IMR-90 (cell line): ENCODE measurements at regions of chr2 and their contacts with region 1.

Region 1: DNA sequence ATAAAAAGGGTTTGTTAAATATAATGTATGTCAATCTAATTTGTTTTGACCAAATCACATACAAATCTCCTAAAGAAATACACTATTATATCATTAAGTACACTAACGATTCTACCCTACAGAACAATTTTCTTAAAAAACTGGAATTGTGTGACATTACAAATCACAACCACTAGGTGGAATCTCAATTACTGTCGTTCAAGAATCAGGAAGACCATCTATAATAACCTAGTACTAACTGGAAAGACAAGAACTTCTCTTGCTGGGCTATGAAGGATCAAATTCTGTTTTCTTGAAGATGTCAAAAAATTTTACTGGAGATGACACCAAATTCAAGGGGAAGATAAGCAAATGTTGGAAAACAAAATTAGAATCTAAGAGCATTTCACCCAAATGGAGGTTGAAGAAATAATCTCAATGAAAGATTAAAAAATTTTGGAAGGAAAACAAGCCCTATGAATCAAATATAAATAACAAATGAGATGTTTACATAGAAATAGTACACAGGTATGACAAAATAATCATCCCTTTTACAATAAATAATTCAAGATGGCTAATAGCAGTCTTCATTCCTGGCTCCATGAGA is 110.9 kb downstream of the STK39 start:
- DNase-seq: peak; percentile 48
- ATAC-seq: 0 out of 2 replicates have a peak, but pooled peaks have one; percentile 36
- H3K4me3 ChIP-seq: no peak overlapping the region
- H3K27ac ChIP-seq: no peak overlapping the region
- H3K4me1 ChIP-seq: peaks cover 4% of the 10 kb centered on the region
- H3K27me3 ChIP-seq: no peaks in the 10 kb centered on the region
- CTCF ChIP-seq: peak; percentile 52
- POLR2A ChIP-seq: no peak
- RAD21 ChIP-seq: peak; percentile 47

Region 2: DNA sequence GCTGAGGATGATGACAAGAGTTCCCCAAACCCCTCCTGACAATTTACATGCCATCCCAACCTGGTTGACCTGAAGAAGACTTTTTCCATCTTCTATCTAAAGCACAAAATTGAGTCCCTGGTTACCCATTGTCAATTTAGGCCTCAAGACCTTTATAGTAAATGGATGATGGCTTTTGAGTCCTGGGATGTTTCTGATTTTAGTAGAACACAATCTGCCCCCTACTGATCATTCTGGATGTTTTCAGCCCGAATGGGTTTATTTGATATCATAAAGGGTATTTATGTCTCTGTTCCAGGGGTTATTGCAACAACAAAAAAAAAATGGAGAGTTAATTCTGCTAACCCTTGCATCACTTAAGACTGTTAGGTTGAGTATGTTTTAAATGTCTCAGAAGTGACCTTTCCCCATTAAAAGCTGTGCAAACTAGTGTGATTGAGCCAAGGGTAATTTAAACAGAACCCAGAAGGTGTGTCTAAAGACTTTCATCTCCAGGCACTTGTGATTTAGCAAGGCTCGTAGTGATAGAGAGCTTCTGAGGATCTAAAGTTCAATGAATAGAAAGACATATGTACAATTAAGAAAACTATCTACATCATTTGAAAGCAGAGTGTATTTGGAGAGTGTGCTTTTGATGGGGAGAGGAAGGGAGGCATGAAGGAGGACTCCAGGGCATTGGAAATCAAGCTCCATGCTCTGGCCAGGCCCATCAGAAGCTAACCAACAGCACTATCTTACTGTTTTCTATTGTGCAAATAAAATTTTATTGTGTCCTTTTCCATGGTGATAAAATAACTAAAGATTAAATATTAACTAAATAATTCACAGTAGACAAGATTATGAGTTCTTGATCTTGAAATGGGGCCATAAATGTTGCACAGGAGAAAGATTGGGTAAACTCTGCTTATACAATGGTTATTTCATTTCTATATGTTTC is 569.3 kb after region 1 on chr2:
- CTCF ChIA-PET with region 1: no interaction called
- POLR2A ChIA-PET with region 1: no interaction called
- dilution Hi-C with region 1: no loop called
- in situ Hi-C with region 1: no loop called
- intact Hi-C with region 1: loop called (anchors 10 kb)
- DNase-seq: peak; percentile 51
- ATAC-seq: peak; percentile 65
- H3K4me3 ChIP-seq: no peak overlapping the region
- H3K27ac ChIP-seq: no peak overlapping the region
- H3K4me1 ChIP-seq: no peaks in the 10 kb centered on the region
- H3K27me3 ChIP-seq: no peaks in the 10 kb centered on the region
- CTCF ChIP-seq: peak; percentile 51
- POLR2A ChIP-seq: no peak
- RAD21 ChIP-seq: peak; percentile 52

Region 3: GRCh38 chr2:168758970-168759820 is 622.7 kb after region 1 on chr2:
- CTCF ChIA-PET with region 1: no interaction called
- POLR2A ChIA-PET with region 1: no interaction called
- dilution Hi-C with region 1: no loop called
- in situ Hi-C with region 1: no loop called
- intact Hi-C with region 1: loop called (anchors 5 kb)
- DNase-seq: peak; percentile 59
- ATAC-seq: peak; percentile 95
- H3K4me3 ChIP-seq: no peak overlapping the region
- H3K27ac ChIP-seq: no peak overlapping the region
- H3K4me1 ChIP-seq: no peaks in the 10 kb centered on the region
- H3K27me3 ChIP-seq: no peaks in the 10 kb centered on the region
- CTCF ChIP-seq: peak; percentile 62
- POLR2A ChIP-seq: no peak
- RAD21 ChIP-seq: peak; percentile 66

Region 4: DNA sequence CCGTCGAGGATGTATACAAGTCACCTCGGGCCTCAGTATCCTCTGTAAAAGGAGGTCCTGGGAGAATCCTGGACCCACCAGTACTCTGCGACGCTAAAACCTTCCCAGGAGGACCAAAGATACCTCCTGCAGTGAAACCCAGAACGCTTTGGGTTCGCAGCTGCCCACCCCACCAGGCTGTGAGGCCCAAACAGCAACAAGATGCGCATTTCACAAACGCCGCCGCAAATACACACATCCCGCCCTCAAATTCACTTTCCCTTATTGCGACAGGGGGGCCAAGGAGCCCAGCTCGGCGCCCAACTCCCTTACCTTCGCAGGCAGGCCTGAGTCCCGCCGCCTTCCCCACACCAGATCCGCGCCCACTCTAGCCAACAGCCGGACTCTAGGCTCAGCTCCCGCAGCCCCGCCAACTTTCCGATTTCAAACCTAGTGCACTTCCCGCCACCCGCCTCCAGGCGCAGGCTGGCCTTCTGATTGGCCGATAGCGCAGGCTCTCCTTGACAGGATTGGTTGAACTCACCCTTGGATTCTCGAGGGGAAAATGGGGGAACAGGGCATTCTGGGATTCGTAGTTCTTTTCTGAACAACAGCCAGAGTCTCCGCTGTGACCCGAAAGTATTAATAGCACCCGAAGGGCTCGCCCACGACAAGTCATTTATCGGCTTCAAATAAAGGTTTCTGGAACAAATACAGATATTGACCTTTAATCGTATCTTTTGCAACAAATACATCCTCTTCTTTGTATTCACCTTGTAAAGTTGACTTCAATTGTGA is 753.7 kb after region 1 on chr2 and contains the start of gene SPC25:
- CTCF ChIA-PET with region 1: no interaction called
- POLR2A ChIA-PET with region 1: no interaction called
- dilution Hi-C with region 1: no loop called
- in situ Hi-C with region 1: loop called (anchors 25 kb)
- intact Hi-C with region 1: no loop called
- DNase-seq: peak; percentile 85
- ATAC-seq: peak; percentile 100
- H3K4me3 ChIP-seq: peak within 1 kb of the TSS; percentile 77
- H3K27ac ChIP-seq: peak within 1 kb of the TSS; percentile 21; the same call in 1 of the 2 replicates
- H3K4me1 ChIP-seq: no peaks in the 10 kb centered on the region
- H3K27me3 ChIP-seq: peaks cover 3% of the 10 kb centered on the region; the same call in 1 of the 2 replicates
- CTCF ChIP-seq: no peak
- POLR2A ChIP-seq: no peak
- RAD21 ChIP-seq: no peak
- total RNA-seq, gene SPC25: 2.0 and 5.6 TPM in 2 replicates

Region 5: DNA sequence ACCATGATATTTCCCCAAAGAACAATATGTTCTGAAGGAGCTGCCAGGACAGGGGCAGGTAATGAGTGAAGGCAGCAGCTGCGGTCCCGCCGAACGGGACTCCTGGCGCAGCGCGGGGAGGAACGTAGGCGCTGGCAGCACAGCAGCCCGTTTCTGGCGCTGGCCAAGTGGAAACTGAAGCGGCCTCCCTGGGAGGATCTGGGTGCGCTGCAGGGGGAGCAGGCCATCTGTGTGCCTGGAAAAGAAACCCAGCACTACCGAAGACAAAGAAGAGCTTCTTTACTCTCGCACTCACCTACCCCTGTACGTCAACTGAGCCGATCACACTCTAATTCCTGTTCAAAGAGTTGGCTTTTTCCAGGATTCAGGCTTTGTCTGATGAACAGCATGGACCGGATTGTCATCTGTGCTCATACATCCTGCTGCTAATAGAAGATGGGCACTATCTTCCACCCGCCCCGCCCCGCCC is 776.5 kb after region 1 on chr2:
- CTCF ChIA-PET with region 1: interaction called, 3 read pairs
- POLR2A ChIA-PET with region 1: no interaction called
- dilution Hi-C with region 1: no loop called
- in situ Hi-C with region 1: no loop called
- intact Hi-C with region 1: loop called (anchors 10 kb)
- DNase-seq: peak; percentile 4
- ATAC-seq: peak; percentile 68
- H3K4me3 ChIP-seq: peak overlapping the region; percentile 15
- H3K27ac ChIP-seq: no peak overlapping the region
- H3K4me1 ChIP-seq: no peaks in the 10 kb centered on the region
- H3K27me3 ChIP-seq: peaks cover 16% of the 10 kb centered on the region
- CTCF ChIP-seq: no peak
- POLR2A ChIP-seq: no peak
- RAD21 ChIP-seq: no peak